Mammary epithelial cell (primary cell): ENCODE measurements at regions of chr19 and their contacts with region 1.

Region 1: DNA sequence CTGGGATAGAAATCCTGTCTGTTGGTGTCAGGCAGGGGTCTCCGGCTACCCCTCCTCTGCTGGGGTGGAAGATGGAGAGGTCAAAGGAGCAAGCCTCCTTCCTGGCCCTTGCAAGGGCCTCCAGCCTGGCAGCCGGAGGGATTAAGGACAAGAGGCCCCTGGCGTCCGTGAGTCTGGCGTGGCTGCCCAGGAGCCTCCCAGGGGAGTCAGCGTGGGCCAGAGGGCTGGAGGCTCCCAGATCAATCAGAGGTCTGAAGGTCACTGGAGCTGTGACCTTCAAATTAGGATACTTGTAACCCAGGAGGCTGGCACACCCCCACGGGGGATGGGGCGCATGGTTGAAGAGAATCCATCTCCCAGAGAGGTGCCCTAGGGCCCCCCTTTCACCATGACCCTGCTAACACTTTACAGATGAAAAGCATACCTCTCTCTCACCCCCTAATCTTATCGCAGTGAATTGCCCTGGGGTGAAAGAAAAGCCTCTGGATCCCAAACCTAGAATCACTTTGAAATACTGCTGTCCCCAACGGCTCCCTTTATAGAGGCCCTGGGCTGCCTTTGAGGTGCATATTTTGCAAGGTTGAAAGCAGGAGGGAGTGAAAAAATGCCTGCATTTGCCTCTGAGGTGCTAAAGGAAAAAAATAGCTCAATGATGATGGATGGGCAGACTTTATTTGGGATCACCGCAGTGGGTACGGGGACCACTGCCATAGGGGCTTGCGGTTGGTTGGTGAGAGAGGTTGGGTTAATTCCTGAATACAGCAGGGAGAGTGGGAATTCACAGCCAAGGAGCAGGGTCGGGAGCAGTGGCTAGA is 44.9 kb upstream of the PEG3 start:
- DNase-seq: no peak
- H3K4me3 ChIP-seq: no peak overlapping the region
- H3K27ac ChIP-seq: no peak overlapping the region
- H3K4me1 ChIP-seq: no peaks in the 10 kb centered on the region
- H3K27me3 ChIP-seq: no peaks in the 10 kb centered on the region
- CTCF ChIP-seq: no peak

Region 2: DNA sequence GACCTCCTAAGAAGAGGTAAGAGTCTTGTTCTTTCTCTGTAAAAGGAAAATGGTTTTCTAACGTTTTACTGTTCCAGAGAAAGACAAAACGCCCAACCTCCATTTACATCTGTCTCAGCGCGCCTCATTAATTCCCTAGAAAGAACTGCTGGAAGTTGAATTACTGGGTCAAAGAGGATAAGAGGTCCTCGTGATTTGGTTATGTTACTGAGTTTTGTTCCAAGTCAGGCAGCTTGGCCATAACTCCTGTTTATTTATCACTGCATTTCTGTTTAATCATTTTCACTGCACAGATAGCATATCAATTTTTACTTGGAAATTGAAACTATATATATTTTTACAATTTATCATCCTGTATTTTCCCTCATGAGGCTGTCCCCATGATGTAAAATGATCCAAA is 68.1 kb after region 1 on chr19:
- CTCF ChIA-PET with region 1: no interaction called
- dilution Hi-C with region 1: loop called (anchors 5 kb)
- in situ Hi-C with region 1: no loop called
- intact Hi-C with region 1: no loop called
- DNase-seq: no peak
- H3K4me3 ChIP-seq: no peak overlapping the region
- H3K27ac ChIP-seq: no peak overlapping the region
- H3K4me1 ChIP-seq: no peaks in the 10 kb centered on the region
- H3K27me3 ChIP-seq: no peaks in the 10 kb centered on the region
- CTCF ChIP-seq: no peak

Region 3: GRCh38 chr19:56978023-56978565 is 92.7 kb after region 1 on chr19:
- CTCF ChIA-PET with region 1: no interaction called
- dilution Hi-C with region 1: loop called (anchors 5 kb)
- in situ Hi-C with region 1: no loop called
- intact Hi-C with region 1: no loop called
- DNase-seq: no peak
- H3K4me3 ChIP-seq: no peak overlapping the region
- H3K27ac ChIP-seq: no peak overlapping the region
- H3K4me1 ChIP-seq: no peaks in the 10 kb centered on the region
- H3K27me3 ChIP-seq: no peaks in the 10 kb centered on the region
- CTCF ChIP-seq: no peak